ENCODE measurements at regions of chr10 and their contacts with region 1.

Region 1: DNA sequence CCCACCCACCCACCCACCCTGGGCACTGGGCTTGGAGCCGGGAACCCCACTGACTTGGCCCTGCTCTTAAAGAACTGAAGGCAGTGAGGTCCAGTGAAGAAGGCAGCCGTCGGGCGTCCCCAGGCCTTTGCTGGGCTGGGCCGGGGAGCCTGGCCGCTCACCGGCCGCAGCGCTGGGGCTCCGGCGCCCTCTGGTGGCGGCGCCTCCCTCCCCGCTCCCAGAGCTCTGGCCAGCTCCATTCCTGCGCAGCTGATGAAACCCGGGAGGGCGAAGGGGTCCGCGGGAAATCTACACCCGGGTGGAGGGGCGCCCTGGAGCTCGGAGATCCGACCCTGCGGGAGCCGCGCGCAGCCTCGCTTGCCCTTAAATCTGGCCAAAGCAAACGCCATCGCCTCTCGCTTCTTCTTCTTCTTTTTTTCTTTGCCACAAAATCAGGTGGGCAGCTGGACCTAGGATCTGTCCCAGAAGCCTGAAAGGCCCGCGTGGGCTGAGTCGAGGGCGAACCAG is 1.7 kb upstream of the CXCL12 start:
- DNase-seq: no peak
- ATAC-seq: peak; percentile 93
- H3K4me3 ChIP-seq: peak overlapping the region in 1 of 2 experiments; percentile 23; a peak in 1 of 4 replicates
- H3K27ac ChIP-seq: no peak overlapping the region
- H3K4me1 ChIP-seq: no peaks in the 10 kb centered on the region
- H3K27me3 ChIP-seq: peaks cover 21% of the 10 kb centered on the region; the same call in 1 of the 2 replicates
- CTCF ChIP-seq: peak; percentile 97

Region 2: GRCh38 chr10:43671656-43672531 is 714.7 kb before region 1 on chr10:
- CTCF ChIA-PET with region 1: no interaction called
- POLR2A ChIA-PET with region 1: no interaction called
- in situ Hi-C with region 1: no loop called
- intact Hi-C with region 1: loop called (anchors 1 kb)
- DNase-seq: peak; percentile 64
- ATAC-seq: peak; percentile 89
- H3K4me3 ChIP-seq: no peak overlapping the region
- H3K27ac ChIP-seq: no peak overlapping the region
- H3K4me1 ChIP-seq: no peaks in the 10 kb centered on the region
- H3K27me3 ChIP-seq: peaks cover 6% of the 10 kb centered on the region; the same call in 1 of the 2 replicates
- CTCF ChIP-seq: peak; percentile 87

Region 3: DNA sequence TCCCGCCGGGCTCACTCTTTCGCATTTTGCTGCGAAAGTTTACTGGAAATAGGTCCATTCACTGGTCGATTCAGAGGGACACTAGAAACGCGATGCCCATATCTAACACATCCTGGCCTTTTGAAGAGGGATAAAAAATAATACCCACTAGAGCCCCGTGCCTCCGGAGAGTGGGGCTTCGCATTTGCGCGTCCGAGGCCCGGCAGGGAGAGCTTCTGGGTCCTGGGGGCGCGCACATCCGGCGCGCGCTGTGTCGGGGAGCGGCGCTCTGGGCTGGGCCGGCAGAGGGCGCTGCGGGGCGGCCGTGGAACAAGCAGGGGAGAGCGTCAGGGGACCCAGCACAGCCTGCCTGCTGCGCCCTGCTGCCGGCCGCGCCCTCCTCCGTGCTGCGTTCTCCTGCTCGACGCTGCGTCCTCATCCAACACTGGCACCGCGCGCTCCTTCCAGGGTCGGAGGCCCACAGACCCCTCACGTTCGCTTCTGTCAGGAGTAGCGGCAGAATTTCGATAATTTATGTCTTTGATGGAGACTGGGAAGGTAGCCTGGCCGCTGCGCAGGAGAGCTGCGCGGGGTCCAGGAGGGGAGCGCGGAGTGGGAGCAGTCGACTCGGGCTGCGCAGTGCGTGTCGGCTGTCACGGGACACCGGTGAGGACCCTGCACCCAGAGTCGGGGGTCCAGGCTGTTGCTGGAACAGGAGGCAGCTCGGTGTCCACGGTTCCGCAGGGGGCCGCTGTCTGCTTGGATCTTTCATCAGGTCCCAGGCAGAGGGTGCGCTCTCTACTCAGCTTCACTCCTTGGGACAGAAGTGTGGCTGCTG is 696.4 kb before region 1 on chr10:
- CTCF ChIA-PET with region 1: interaction called, 6 read pairs
- POLR2A ChIA-PET with region 1: no interaction called
- in situ Hi-C with region 1: no loop called
- intact Hi-C with region 1: loop called (anchors 1 kb)
- DNase-seq: no peak
- ATAC-seq: peak; percentile 99
- H3K4me3 ChIP-seq: peak overlapping the region; percentile 62 to 91
- H3K27ac ChIP-seq: peak overlapping the region; percentile 70
- H3K4me1 ChIP-seq: no peaks in the 10 kb centered on the region
- H3K27me3 ChIP-seq: peaks cover 7% of the 10 kb centered on the region
- CTCF ChIP-seq: peak; percentile 100

Region 4: DNA sequence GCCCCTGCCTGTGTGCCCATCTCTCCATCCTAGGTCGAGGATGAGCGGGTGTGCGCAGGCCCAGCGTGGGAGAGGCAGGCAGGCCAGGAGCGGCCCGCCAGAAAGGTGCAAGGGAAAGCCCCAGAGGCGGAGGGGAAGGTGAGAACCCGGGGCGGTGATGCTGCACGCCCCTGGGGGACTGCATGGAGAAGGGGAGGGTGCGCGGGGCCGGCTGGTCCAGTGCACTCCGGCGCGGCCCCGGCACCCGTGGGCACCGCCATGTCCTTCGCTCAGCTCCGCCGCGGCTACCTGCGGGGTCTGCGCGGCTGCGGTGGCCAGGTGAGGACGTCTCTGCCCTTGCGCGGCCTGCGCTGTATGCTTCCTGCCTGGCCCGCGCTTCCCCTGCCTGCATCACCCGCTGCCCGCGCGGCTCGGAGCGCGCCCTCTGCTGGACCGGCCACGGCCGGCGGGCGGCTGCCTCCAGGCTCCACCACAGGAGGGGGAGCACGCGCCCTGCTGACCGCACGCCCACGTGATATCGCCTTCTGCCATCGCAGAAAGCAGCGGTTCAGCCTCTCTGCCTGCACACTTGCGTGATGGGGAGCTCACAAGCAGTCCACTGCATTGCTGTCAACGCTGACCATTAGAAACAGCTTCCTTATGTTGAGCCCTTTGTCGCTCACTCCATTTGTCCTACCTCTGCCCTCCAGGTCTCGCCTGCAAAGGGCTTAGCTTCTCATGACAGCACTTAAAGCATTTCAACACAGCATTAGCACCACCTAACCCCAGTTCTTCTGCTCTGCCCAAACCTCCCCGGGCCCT is 75.6 kb before region 1 on chr10:
- CTCF ChIA-PET with region 1: no interaction called
- POLR2A ChIA-PET with region 1: no interaction called
- in situ Hi-C with region 1: no loop called
- intact Hi-C with region 1: loop called (anchors 10 kb)
- DNase-seq: no peak
- ATAC-seq: peak; percentile 97
- H3K4me3 ChIP-seq: peak overlapping the region in 1 of 2 experiments; percentile 18; a peak in 1 of 4 replicates
- H3K27ac ChIP-seq: no peak overlapping the region
- H3K4me1 ChIP-seq: no peaks in the 10 kb centered on the region
- H3K27me3 ChIP-seq: peaks cover 6% of the 10 kb centered on the region; the same call in 1 of the 2 replicates
- CTCF ChIP-seq: peak; percentile 97

Region 5: DNA sequence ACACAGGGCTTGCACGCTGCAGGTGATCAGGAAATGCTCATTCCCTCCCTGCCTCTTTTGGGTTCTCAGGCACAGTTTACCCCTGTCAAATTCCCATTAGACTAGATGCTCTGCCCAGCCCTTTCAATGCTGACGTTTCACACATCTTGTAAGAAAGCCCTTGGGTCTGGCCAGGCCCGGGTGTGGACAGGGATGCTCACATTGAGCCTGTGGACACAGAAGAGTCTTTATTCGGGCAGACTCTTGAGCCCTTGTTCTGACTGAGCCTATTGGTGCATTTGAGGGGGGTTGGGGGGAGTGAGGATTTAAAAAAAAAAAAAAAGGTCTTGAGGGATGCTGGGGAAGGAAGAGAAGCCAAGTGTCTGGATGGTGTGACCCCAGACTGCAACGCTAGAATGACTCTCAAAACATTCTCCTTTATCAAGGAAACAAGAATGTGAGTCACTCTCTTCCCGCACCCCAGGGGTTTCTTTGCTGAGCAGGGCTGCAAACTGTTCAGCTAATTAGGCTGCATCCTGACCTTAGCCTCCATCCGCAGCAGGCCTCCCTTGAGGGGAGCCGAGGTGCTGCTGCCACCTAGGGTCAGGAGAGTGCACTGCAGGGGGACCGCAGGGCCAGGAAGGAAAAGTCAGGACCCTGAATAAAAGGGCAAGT is 470.9 kb after region 1 on chr10:
- CTCF ChIA-PET with region 1: no interaction called
- POLR2A ChIA-PET with region 1: no interaction called
- in situ Hi-C with region 1: no loop called
- intact Hi-C with region 1: loop called (anchors 5 kb)
- DNase-seq: no peak
- ATAC-seq: peak; percentile 79
- H3K4me3 ChIP-seq: no peak overlapping the region
- H3K27ac ChIP-seq: no peak overlapping the region
- H3K4me1 ChIP-seq: no peaks in the 10 kb centered on the region
- H3K27me3 ChIP-seq: no peaks in the 10 kb centered on the region
- CTCF ChIP-seq: peak; percentile 100

Region 6: DNA sequence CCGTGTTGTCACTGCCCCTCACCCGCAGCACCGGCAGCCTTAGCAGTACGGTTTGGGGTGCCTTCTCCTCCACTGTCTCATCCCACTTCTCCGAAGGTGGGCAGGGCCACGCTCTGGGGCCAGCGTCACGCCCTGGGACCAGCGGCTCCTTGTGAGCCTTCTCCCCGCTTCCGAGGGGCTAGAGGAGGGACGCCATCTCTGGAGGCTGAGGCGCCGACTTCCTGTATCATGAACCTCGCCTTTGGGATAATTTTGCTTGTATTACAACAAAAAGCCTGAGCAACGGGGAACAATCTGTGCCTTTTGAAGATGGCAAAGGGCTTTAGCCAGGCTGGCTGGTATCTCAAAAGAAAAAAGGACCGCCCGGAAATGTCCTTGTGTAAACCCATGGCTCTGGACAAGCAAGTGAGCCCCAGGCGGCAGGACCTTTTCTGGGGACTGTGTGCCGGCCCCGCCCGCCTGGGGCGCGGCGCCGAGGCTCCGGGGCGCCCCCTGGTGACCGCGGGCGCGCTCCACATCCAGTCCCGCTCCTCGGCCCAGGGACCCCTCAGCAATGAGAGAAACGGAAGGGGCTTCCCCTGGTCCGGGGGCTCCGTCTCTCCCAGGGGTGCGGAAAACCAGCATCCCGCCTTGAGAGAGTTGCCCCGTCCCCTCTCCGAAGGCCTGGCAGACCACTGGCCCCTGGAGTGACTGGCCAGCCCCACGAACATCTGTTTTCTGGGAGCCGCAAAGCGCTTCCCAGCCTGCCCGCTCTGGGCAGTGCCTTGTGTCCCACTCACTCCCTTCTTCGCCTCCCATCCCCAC is 588.2 kb after region 1 on chr10:
- CTCF ChIA-PET with region 1: no interaction called
- POLR2A ChIA-PET with region 1: interaction called, 11 read pairs
- in situ Hi-C with region 1: no loop called
- intact Hi-C with region 1: no loop called
- DNase-seq: no peak
- ATAC-seq: peak; percentile 84
- H3K4me3 ChIP-seq: peak overlapping the region; percentile 46 to 65
- H3K27ac ChIP-seq: peak overlapping the region; percentile 96
- H3K4me1 ChIP-seq: peaks cover 57% of the 10 kb centered on the region
- H3K27me3 ChIP-seq: no peaks in the 10 kb centered on the region
- CTCF ChIP-seq: peak; percentile 100